Gastrocnemius medialis (tissue), 4 donors: ENCODE measurements at regions of chr15 and their contacts with region 1.

Region 1: DNA sequence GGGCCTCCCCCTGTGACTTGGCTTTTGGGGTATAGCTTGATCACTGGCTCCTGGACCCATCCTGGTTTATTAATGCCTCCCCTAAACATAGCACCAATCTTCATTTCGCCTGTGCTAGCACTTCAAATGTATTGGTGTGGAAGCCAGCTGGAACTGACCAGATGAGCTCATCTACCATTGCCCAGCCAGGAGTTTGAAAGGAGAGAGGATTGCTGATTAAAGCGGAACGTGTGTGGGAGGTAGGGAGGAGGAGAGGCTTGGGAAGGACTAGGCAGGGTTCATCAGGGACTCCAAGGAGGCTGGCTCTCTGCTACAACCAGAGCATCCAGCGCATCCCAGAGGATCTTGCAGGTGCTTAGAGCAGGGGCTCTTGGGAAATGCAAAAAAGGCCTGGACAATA is 34.4 kb upstream of the TLE3 start:
- DNase-seq: peak; percentile 29
- ATAC-seq: peak; percentile 91 to 94
- H3K4me3 ChIP-seq: no peak overlapping the region
- H3K27ac ChIP-seq: no peak overlapping the region
- H3K4me1 ChIP-seq: peaks cover 12 to 15% of the 10 kb centered on the region in 2 donors
- H3K27me3 ChIP-seq: no peaks in the 10 kb centered on the region
- CTCF ChIP-seq: no peak
- POLR2A ChIP-seq: no peak

Region 2: GRCh38 chr15:70466895-70467529 is 334.9 kb after region 1 on chr15:
- in situ Hi-C with region 1: loop called in 1 of 4 experiments (anchors 10 kb)
- intact Hi-C with region 1: no loop called
- DNase-seq: no peak
- ATAC-seq: no peak
- H3K4me3 ChIP-seq: no peak overlapping the region
- H3K27ac ChIP-seq: no peak overlapping the region
- H3K4me1 ChIP-seq: no peaks in the 10 kb centered on the region
- H3K27me3 ChIP-seq: no peaks in the 10 kb centered on the region
- CTCF ChIP-seq: peak in 3 of 5 experiments; percentile 10 to 39 (median 13)
- POLR2A ChIP-seq: no peak